HepG2 (cell line): ENCODE measurements at regions of chr2 and their contacts with region 1.

Region 1: GRCh38 chr2:74919827-74920226 is 38.6 kb upstream of the POLE4 start:
- DNase-seq: peak; percentile 31
- ATAC-seq: peak; percentile 13
- H3K4me3 ChIP-seq: peak overlapping the region in 2 of 3 experiments; percentile 7 to 41; a peak in 1 of 6 replicates
- H3K27ac ChIP-seq: no peak overlapping the region
- H3K4me1 ChIP-seq: peaks cover 84% of the 10 kb centered on the region
- H3K27me3 ChIP-seq: 0 out of 5 replicates have a peak, but pooled peaks cover 0 to 7% of the 10 kb centered on the region in 2 experiments
- CTCF ChIP-seq: peak; percentile 91
- EP300 ChIP-seq: no peak
- POLR2A ChIP-seq: no peak
- RAD21 ChIP-seq: peak; percentile 96

Region 2: DNA sequence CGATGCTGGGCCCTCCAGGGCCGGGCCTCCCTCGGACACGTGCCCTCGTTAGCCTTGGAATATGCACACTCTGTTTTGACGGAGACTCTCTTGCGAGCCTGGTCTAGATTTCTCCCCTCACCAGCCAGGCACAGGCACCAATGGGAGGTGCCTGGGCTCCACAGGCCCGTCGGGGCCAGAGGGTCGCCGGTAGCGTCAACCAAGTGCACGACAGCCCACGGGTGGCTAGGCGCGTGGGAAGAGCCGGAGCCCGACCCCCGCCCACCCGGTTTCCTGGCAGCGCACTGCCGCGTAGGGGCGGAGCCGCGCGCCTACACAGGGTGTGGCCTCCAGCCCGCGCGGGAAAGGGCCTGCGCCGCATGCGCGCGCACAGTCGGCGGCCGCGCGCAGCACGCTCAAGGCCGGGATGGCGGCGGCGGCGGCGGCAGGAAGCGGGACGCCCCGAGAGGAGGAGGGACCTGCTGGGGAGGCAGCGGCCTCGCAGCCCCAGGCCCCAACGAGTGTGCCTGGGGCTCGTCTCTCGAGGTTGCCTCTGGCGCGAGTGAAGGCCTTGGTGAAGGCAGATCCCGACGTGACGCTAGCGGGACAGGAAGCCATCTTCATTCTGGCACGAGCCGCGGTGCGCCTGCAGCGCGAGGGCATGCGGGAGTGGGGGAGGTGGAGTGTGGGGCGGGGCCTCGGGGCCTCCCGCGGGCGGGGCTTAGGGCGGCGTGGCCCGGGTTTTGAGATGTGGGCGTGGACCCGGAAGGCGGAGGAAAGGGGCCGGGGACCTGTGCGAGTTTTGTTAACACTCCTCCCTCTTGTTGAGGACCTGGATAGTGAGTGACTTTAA is 38.7 kb after region 1 on chr2 and contains the start of gene POLE4:
- CTCF ChIA-PET with region 1: no interaction called
- POLR2A ChIA-PET with region 1: interaction called, 4 read pairs
- in situ Hi-C with region 1: no loop called
- intact Hi-C with region 1: loop called (anchors 5 kb)
- DNase-seq: peak; percentile 86
- ATAC-seq: peak; percentile 95
- H3K4me3 ChIP-seq: peak within 1 kb of the TSS; percentile 59 to 84 (median 67)
- H3K27ac ChIP-seq: peak within 1 kb of the TSS; percentile 92
- H3K4me1 ChIP-seq: peaks cover 72% of the 10 kb centered on the region
- H3K27me3 ChIP-seq: no peaks in the 10 kb centered on the region
- CTCF ChIP-seq: peak; percentile 48
- EP300 ChIP-seq: 0 out of 4 replicates have a peak, but pooled peaks of 1 of the 2 experiments have one; percentile 1
- POLR2A ChIP-seq: peak; percentile 96 to 97
- RAD21 ChIP-seq: peak; percentile 86
- total RNA-seq, gene POLE4: 106 and 143 TPM in 2 replicates

Region 3: GRCh38 chr2:74982577-74982976 is 62.8 kb after region 1 on chr2:
- CTCF ChIA-PET with region 1: interaction called, 9 read pairs
- POLR2A ChIA-PET with region 1: no interaction called
- in situ Hi-C with region 1: no loop called
- intact Hi-C with region 1: loop called (anchors 1 kb)
- DNase-seq: peak; percentile 24
- ATAC-seq: peak; percentile 67
- H3K4me3 ChIP-seq: no peak overlapping the region
- H3K27ac ChIP-seq: no peak overlapping the region
- H3K4me1 ChIP-seq: no peaks in the 10 kb centered on the region
- H3K27me3 ChIP-seq: no peaks in the 10 kb centered on the region
- CTCF ChIP-seq: peak; percentile 61
- EP300 ChIP-seq: no peak
- POLR2A ChIP-seq: no peak
- RAD21 ChIP-seq: peak; percentile 56

Region 4: DNA sequence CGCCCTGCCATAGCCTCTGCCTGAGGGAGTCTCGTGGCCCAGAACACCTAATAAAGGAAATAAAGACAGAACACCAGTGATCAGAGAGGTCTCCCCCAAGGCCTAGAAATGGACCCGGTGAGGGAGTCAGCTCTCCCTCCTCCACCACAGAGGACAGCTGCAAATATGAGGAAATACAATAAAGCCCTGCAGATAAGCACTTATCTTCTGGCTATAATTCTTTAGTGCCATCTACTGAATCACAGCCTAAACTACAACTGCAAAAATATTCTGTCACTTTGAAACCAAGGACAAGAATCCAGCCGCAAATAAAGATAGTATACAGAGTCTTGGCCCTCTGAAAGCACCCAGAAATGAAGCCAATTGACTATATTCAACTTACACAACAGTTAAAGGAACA is 321.9 kb after region 1 on chr2:
- CTCF ChIA-PET with region 1: no interaction called
- POLR2A ChIA-PET with region 1: no interaction called
- in situ Hi-C with region 1: loop called (anchors 10 kb)
- intact Hi-C with region 1: loop called (anchors 2 kb)
- DNase-seq: peak; percentile 25
- ATAC-seq: peak; percentile 66
- H3K4me3 ChIP-seq: no peak overlapping the region
- H3K27ac ChIP-seq: no peak overlapping the region
- H3K4me1 ChIP-seq: no peaks in the 10 kb centered on the region
- H3K27me3 ChIP-seq: no peaks in the 10 kb centered on the region; a peak in 1 of 5 replicates
- CTCF ChIP-seq: peak; percentile 65
- EP300 ChIP-seq: no peak
- POLR2A ChIP-seq: no peak
- RAD21 ChIP-seq: peak; percentile 67; the same call in 1 of the 2 replicates